Activated CD4-positive, alpha-beta T cell treated with anti-CD3 and anti-CD28 coated beads, Interleukin-2, amount 10 ng/mL, durations not matched to agents 24 days and 14 days (primary cell): ENCODE measurements at regions of chrX and their contacts with region 1.

Region 1: DNA sequence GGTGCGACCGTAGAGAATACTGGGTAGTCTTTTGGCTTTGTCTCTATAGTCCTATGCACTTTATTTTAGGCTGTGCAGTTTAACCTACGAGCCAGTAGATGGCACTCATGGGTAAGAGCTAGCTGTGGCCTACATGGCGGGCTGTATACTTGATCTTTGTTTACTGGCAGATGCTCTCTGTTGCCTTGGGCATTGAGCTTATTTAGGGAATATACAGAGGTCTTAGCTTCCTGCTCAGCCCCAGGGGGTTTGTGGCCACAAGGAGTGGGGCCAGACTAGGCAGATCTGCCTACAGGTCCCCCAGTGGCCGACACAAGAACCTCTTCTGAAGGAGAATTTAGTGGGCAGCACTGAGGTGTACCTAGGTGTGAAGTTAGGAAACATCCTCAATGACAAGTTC is 227.6 kb upstream of the HDX start:
- DNase-seq: peak; percentile 57
- H3K4me3 Mint-ChIP-seq: no peak overlapping the region
- H3K27ac Mint-ChIP-seq: no peak overlapping the region
- H3K4me1 Mint-ChIP-seq: no peaks in the 10 kb centered on the region
- H3K27me3 Mint-ChIP-seq: no peaks in the 10 kb centered on the region

Region 2: GRCh38 chrX:84715315-84715714 is 14.5 kb before region 1 on chrX:
- intact Hi-C with region 1: no loop called
- DNase-seq: no peak
- H3K4me3 Mint-ChIP-seq: no peak overlapping the region
- H3K27ac Mint-ChIP-seq: no peak overlapping the region
- H3K4me1 Mint-ChIP-seq: no peaks in the 10 kb centered on the region
- H3K27me3 Mint-ChIP-seq: no peaks in the 10 kb centered on the region

Region 3: GRCh38 chrX:84760560-84760959 is 30.8 kb after region 1 on chrX:
- intact Hi-C with region 1: no loop called
- DNase-seq: no peak
- H3K4me3 Mint-ChIP-seq: no peak overlapping the region
- H3K27ac Mint-ChIP-seq: no peak overlapping the region
- H3K4me1 Mint-ChIP-seq: no peaks in the 10 kb centered on the region
- H3K27me3 Mint-ChIP-seq: no peaks in the 10 kb centered on the region

Region 4: DNA sequence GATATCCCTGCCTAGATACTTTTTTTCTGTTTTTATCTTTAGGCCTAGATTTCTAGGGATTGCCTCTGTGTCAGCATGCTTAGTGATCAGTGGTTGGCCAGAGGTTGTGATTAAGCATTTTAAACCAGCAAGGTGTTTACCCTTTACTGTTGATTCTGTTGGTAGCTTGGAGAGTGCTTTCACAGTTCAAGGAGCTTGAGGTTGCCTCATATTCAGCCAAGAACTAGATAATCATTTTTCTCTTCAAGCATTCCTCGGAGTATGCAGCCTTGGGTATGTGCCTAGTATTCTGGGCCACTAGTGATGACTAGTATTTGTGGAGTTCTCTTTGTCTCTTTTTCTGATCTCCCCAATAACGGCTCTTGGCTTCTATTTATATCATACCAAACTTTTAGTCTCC is 294.2 kb after region 1 on chrX:
- intact Hi-C with region 1: no loop called
- DNase-seq: no peak
- H3K4me3 Mint-ChIP-seq: no peak overlapping the region
- H3K27ac Mint-ChIP-seq: no peak overlapping the region
- H3K4me1 Mint-ChIP-seq: no peaks in the 10 kb centered on the region
- H3K27me3 Mint-ChIP-seq: no peaks in the 10 kb centered on the region

Region 5: DNA sequence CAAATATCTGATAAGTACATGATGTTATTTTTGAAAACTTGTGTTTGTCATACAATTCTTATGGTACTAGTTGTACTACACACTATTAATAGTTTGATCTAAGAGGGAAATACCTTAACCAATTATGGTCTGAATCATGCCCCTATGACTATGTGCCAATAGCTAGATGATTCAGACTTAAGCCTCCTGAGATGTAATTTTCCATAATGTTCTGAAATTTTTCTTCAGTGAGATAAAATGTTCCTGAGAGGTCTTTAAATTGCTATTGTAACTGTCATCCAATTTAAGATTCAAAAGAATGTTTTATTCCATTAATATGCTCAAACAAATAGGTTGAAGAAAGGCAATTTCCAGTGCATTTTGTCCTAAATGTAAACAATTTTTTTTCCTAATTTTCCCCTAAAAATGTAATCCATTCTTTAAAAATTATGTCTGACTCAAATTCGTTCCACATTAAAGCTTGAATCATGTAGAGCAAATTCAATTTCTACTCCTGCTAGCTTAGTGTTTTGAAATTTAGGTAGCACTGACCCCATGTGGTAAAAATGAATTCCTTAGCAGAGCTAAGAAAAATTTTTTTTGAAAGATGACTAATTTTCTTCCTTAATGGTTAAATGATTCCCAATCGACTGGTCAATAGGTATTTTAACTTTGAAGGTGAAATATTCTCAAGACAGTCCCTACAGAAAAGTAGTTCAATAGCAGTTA is 323.0 kb after region 1 on chrX:
- intact Hi-C with region 1: loop called (anchors 2 kb)
- DNase-seq: no peak
- H3K4me3 Mint-ChIP-seq: no peak overlapping the region
- H3K27ac Mint-ChIP-seq: no peak overlapping the region
- H3K4me1 Mint-ChIP-seq: no peaks in the 10 kb centered on the region
- H3K27me3 Mint-ChIP-seq: no peaks in the 10 kb centered on the region